Activated CD8-positive, alpha-beta memory T cell treated with anti-CD3 and anti-CD28 coated beads, Interleukin-2, amount 10 ng/mL, durations not matched to agents 7 days and 5 days (primary cell): ENCODE measurements at regions of chr2 and their contacts with region 1.

Region 1: GRCh38 chr2:231514103-231514950 is 15.9 kb downstream of the NMUR1 start:
- DNase-seq: peak; percentile 99
- ATAC-seq: peak; percentile 99
- H3K4me3 Mint-ChIP-seq: peak overlapping the region; percentile 83
- H3K27ac Mint-ChIP-seq: peak overlapping the region; percentile 94
- H3K4me1 Mint-ChIP-seq: peaks cover 28% of the 10 kb centered on the region
- H3K27me3 Mint-ChIP-seq: peaks cover 12% of the 10 kb centered on the region

Region 2: GRCh38 chr2:231482806-231483391 is 31.4 kb before region 1 on chr2:
- CTCF ChIA-PET with region 1: interaction called, 23 read pairs
- DNase-seq: peak; percentile 84
- ATAC-seq: peak; percentile 88
- H3K4me3 Mint-ChIP-seq: peak overlapping the region; percentile 74
- H3K27ac Mint-ChIP-seq: peak overlapping the region; percentile 85
- H3K4me1 Mint-ChIP-seq: peaks cover 13% of the 10 kb centered on the region
- H3K27me3 Mint-ChIP-seq: no peaks in the 10 kb centered on the region

Region 3: GRCh38 chr2:231530091-231531011 is 16.0 kb after region 1 on chr2 and contains the start of gene NMUR1:
- CTCF ChIA-PET with region 1: interaction called, 23 read pairs
- DNase-seq: peak; percentile 82
- ATAC-seq: peak; percentile 94
- H3K4me3 Mint-ChIP-seq: peak within 1 kb of the TSS; percentile 70
- H3K27ac Mint-ChIP-seq: peak within 1 kb of the TSS; percentile 60
- H3K4me1 Mint-ChIP-seq: peaks cover 51% of the 10 kb centered on the region
- H3K27me3 Mint-ChIP-seq: peaks cover 40% of the 10 kb centered on the region
- total RNA-seq, gene NMUR1: 3.6 to 8.6 TPM